ENCODE measurements at regions of chr10 and their contacts with region 1.

Region 1: GRCh38 chr10:43105102-43105785 is 28.4 kb downstream of the RET start:
- DNase-seq: peak; percentile 85
- ATAC-seq: peak; percentile 95
- H3K4me3 ChIP-seq: peak overlapping the region; percentile 55 to 82 (median 65)
- H3K4me3 Mint-ChIP-seq: peak overlapping the region; percentile 90
- H3K27ac ChIP-seq: no peak overlapping the region
- H3K27ac Mint-ChIP-seq: peak overlapping the region; percentile 50
- H3K4me1 ChIP-seq: peaks cover 15 to 25% of the 10 kb centered on the region in 2 donors
- H3K4me1 Mint-ChIP-seq: peaks cover 17% of the 10 kb centered on the region
- H3K27me3 ChIP-seq: peaks cover 0 to 32% (median 2%) of the 10 kb centered on the region in 4 experiments
- H3K27me3 Mint-ChIP-seq: peaks cover 18% of the 10 kb centered on the region
- CTCF ChIP-seq: peak; percentile 99

Region 2: GRCh38 chr10:42753126-42753506 is 352.1 kb before region 1 on chr10:
- CTCF ChIA-PET with region 1: no interaction called
- POLR2A ChIA-PET with region 1: no interaction called
- intact Hi-C with region 1: loop called (anchors 5 kb)
- DNase-seq: peak; percentile 53
- ATAC-seq: peak; percentile 46
- H3K4me3 ChIP-seq: peak overlapping the region in 4 of 5 experiments; percentile 37 to 67 (median 53)
- H3K4me3 Mint-ChIP-seq: peak overlapping the region; percentile 91
- H3K27ac ChIP-seq: no peak overlapping the region
- H3K27ac Mint-ChIP-seq: no peak overlapping the region
- H3K4me1 ChIP-seq: peaks cover 27 to 28% of the 10 kb centered on the region in 2 donors
- H3K4me1 Mint-ChIP-seq: peaks cover 18% of the 10 kb centered on the region
- H3K27me3 ChIP-seq: peaks cover 0 to 63% (median 23%) of the 10 kb centered on the region in 4 experiments
- H3K27me3 Mint-ChIP-seq: peaks cover 71% of the 10 kb centered on the region
- CTCF ChIP-seq: peak; percentile 54

Region 3: DNA sequence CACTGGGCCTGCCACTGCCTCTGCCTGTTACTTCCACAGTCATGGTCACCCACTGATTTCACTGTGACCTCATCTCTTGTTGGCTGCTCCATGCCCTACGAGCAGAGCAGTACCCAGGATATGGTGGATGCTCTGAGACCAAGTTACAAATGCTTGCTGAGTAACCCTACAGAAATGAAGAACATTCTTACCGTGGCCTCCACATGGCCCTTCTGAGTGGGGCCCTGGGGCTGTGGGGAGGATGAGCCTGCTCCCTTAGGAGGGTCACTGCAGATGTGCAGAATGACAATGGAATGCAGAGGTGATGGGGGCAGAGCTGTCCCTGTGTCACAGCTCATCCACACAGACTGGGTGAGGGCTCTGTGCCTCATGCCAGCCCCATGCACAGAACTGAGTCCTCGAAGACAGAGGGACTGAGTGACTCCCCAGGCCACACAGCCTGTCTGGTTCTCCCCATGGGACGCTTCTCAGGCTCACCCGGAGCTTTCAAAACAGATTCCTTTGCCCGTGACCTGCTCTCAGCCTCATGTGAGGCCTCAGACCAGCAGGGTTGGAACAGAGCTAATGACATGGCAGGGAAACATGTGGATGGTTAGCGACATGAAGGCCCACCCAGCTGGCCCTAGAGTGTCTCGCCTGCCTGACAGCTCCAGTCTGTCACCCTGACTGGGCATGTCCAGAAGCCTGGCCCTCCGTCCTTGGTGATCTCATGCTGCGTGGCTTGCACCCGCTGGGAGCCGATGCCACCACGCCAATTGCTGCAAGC is 56.5 kb before region 1 on chr10:
- CTCF ChIA-PET with region 1: no interaction called
- POLR2A ChIA-PET with region 1: no interaction called
- intact Hi-C with region 1: no loop called
- DNase-seq: no peak
- ATAC-seq: no peak
- H3K4me3 ChIP-seq: no peak overlapping the region
- H3K4me3 Mint-ChIP-seq: no peak overlapping the region
- H3K27ac ChIP-seq: no peak overlapping the region
- H3K27ac Mint-ChIP-seq: no peak overlapping the region
- H3K4me1 ChIP-seq: no peaks in the 10 kb centered on the region
- H3K4me1 Mint-ChIP-seq: no peaks in the 10 kb centered on the region
- H3K27me3 ChIP-seq: no peaks in the 10 kb centered on the region
- H3K27me3 Mint-ChIP-seq: peaks cover 4% of the 10 kb centered on the region
- CTCF ChIP-seq: no peak

Region 4: DNA sequence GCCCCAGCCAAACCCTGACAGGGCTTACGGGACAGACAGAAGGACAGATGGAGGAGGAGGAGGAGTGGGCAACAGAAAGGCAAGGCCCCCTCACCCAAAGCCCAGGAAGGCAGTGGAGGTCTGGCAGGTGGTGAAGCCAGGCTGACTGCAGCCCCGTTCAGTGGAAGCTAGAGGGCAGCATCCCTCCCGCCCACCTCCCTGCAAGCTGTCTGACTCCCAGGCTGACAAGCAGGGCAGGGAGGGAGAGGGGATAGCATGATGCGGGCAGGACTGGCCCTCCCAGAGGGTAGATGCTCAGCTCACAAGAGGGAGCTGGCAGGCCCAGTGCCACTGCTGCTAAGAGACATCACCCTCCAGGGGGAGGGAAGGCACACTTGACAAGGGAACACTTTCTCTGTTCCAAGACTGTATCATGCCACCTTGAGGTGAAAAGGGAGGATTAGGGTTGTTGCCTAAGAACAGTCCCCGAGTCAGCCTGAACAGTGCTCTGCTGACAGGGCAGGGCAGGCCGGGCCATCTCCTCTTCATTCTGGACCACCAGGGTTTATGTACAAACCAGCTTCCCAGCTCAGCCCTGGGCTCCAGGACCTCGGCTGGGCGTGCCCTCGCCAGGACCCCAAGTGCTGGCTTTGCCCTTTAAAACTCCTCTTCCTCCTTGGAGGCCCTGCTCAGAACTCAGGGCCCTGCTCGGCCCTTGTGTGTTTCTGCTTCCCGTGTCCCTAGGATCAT is 99.9 kb after region 1 on chr10:
- CTCF ChIA-PET with region 1: no interaction called
- POLR2A ChIA-PET with region 1: no interaction called
- intact Hi-C with region 1: loop called (anchors 1 kb)
- DNase-seq: peak; percentile 69
- ATAC-seq: peak; percentile 26
- H3K4me3 ChIP-seq: no peak overlapping the region
- H3K4me3 Mint-ChIP-seq: no peak overlapping the region
- H3K27ac ChIP-seq: no peak overlapping the region
- H3K27ac Mint-ChIP-seq: peak overlapping the region; percentile 37
- H3K4me1 ChIP-seq: peaks cover 7 to 16% of the 10 kb centered on the region in 2 donors
- H3K4me1 Mint-ChIP-seq: peaks cover 9% of the 10 kb centered on the region
- H3K27me3 ChIP-seq: no peaks in the 10 kb centered on the region
- H3K27me3 Mint-ChIP-seq: no peaks in the 10 kb centered on the region
- CTCF ChIP-seq: peak; percentile 79

Measured in B cell (primary cell).